ENCODE measurements at regions of chr5 and their contacts with region 1.

Region 1: GRCh38 chr5:43389679-43390329 is 22.4 kb downstream of the CCL28 start:
- DNase-seq: peak; percentile 40
- ATAC-seq: peak; percentile 88
- H3K4me3 ChIP-seq: no peak overlapping the region
- H3K27ac ChIP-seq: no peak overlapping the region
- H3K4me1 ChIP-seq: peaks cover 8% of the 10 kb centered on the region
- H3K27me3 ChIP-seq: no peaks in the 10 kb centered on the region
- CTCF ChIP-seq: peak; percentile 71 to 86 (median 84); a peak in 5 of 6 replicates
- EP300 ChIP-seq: no peak
- POLR2A ChIP-seq: no peak
- RAD21 ChIP-seq: peak; percentile 71

Region 2: DNA sequence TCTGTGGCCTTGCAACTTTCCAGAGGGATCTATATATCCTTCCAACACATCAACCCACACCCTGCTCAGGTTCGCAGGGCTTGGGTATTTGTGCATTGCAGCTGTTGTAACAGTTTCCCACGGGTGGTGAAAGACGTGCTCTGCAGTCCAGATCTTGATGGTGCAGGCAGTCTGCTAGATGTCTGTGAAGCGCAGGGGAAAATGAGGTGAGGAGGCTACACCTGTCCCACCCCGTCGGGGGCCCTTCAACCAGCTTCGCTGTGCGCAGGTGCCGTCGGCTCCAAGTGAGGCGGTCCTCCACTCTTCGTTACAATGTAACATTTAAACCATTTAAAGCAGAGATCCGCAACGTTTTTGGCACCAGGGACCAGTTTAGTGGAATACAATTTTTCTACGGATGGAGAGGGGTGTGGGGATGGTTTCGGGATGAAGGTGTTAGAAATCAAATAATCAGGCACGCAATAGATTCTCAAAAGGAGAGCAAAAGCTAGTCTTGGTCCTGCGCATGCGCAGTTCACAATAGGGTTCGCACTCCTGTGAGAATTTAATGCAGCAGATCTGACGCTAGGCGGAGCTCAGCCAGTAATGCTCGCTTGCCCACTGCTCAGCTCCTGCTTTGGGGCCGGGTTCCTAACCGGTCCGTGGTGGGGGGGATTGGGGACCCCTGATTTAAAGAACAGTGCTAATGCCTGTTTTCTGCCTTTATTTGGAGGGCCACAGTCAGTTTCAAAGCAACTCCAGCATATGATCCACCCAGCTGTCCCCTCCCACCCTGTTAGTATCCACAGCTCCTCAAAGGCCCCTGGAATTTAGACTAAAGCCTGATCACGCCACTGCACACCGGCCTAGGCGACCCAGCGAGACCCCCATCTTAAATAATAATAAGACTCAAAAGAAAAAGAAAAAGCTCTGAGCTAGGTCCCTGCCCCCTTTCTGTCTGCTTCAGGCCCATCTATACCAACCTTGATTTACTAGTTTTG is 481.0 kb before region 1 on chr5:
- CTCF ChIA-PET with region 1: interaction called, 9 read pairs
- POLR2A ChIA-PET with region 1: no interaction called
- RAD21 ChIA-PET with region 1: interaction called, 9 read pairs
- SMC1A ChIA-PET with region 1: interaction called, 9 read pairs
- in situ Hi-C with region 1: loop called (anchors 10 kb)
- intact Hi-C with region 1: loop called (anchors 2 kb)
- DNase-seq: peak; percentile 51
- ATAC-seq: peak; percentile 97
- H3K4me3 ChIP-seq: peak overlapping the region; percentile 62; the same call in 1 of the 2 replicates
- H3K27ac ChIP-seq: no peak overlapping the region
- H3K4me1 ChIP-seq: peaks cover 4% of the 10 kb centered on the region; the same call in 1 of the 2 replicates
- H3K27me3 ChIP-seq: no peaks in the 10 kb centered on the region; a peak in 1 of 4 replicates
- CTCF ChIP-seq: peak; percentile 80 to 91 (median 87)
- EP300 ChIP-seq: no peak
- POLR2A ChIP-seq: no peak
- RAD21 ChIP-seq: peak; percentile 70

Region 3: DNA sequence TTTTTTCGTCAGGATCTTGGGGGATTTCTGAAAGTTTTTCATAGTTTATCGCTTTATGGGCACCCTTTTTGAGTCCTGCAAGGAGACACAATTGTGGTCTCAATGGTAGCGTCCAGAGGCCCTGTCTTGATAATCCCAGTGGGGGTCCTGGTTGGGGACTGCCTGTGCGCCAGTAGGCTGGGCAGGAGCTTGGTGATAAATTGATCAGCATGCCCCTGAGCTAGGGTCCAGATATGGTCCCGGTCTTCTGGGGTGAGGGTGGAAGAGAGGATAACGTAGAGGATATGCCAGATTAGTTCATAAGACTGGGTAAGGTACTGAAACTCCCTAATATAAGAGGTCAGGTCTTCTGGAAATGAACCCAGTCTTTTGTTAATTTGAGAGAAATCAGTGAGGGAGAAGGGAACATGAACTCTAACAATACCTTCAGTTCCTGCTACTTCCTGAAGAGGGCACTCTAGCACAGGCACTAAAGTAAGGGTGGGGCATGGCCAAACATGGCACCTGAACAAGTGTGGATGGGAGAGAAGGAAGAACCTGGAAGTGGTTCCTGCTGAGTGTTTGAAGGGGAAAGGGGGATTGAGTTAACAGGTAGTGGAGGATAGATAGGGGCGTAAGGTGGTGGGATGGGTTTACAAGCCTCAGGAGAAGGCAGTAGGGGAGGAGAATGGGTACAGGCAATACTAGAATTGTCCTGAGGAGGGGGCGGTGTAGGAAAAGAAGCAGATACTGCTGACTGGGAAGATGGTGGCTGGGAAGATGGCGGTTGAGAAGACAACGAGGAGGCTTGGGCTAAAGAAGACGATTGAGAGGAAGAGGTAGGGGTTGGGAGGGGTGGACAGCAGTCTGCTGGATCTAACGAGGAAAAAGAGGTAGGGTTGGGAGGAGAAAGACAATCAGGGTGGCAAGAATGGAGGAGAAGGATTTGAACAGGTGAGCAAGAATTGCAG is 315.9 kb before region 1 on chr5:
- CTCF ChIA-PET with region 1: interaction called, 13 read pairs
- POLR2A ChIA-PET with region 1: no interaction called
- RAD21 ChIA-PET with region 1: interaction called, 8 read pairs
- SMC1A ChIA-PET with region 1: no interaction called
- in situ Hi-C with region 1: loop called (anchors 10 kb)
- intact Hi-C with region 1: loop called (anchors 10 kb)
- DNase-seq: no peak
- ATAC-seq: peak; percentile 66
- H3K4me3 ChIP-seq: no peak overlapping the region
- H3K27ac ChIP-seq: no peak overlapping the region
- H3K4me1 ChIP-seq: 0 out of 2 replicates have a peak, but pooled peaks cover 4% of the 10 kb centered on the region
- H3K27me3 ChIP-seq: no peaks in the 10 kb centered on the region
- CTCF ChIP-seq: peak; percentile 50 to 71 (median 71); a peak in 5 of 6 replicates
- EP300 ChIP-seq: no peak
- POLR2A ChIP-seq: no peak
- RAD21 ChIP-seq: peak; percentile 81

Region 4: DNA sequence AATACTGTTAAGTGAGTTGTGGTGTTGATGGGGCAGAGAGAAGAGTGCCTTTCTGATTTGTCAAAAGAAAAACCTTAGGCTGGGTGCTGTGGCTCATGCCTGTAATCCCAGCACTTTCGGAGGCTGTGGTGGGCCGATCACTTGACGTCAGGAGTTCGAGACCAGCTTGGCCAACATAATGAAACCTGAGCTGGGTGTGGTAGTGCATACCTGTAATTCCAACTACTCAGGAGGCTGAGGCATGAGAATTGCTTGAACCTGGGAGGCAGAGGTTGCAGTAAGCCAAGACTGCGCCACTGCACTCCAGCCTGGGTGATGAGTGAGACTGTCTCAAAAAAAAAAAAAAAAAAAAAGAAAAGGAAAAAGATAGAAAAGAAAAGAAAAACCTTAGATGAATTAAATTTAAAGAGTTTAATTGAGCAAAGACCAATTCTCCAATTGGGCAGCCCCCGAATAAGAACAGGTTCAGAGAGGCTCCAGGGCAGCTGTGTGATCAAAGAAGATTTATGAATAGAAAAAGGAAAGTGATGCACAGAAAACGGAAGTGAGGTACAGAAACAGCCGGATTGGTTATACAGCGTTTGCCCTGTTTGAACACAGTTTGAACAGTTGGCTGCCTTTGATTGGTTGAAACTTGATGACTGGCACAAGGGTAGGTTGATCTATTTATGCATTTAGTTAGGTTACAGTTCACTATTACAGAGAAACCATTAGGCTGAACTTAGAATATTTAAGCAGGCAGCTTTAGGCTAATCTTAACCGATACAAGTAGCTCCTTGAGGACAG is 168.5 kb before region 1 on chr5:
- CTCF ChIA-PET with region 1: interaction called, 52 read pairs
- POLR2A ChIA-PET with region 1: no interaction called
- RAD21 ChIA-PET with region 1: interaction called, 12 read pairs
- SMC1A ChIA-PET with region 1: interaction called, 32 read pairs
- in situ Hi-C with region 1: loop called (anchors 5 kb)
- intact Hi-C with region 1: no loop called
- DNase-seq: no peak
- ATAC-seq: peak; percentile 47; the same call in 2 of the 3 replicates
- H3K4me3 ChIP-seq: no peak overlapping the region
- H3K27ac ChIP-seq: no peak overlapping the region
- H3K4me1 ChIP-seq: no peaks in the 10 kb centered on the region
- H3K27me3 ChIP-seq: no peaks in the 10 kb centered on the region
- CTCF ChIP-seq: no peak
- EP300 ChIP-seq: no peak
- POLR2A ChIP-seq: no peak
- RAD21 ChIP-seq: no peak

Region 5: DNA sequence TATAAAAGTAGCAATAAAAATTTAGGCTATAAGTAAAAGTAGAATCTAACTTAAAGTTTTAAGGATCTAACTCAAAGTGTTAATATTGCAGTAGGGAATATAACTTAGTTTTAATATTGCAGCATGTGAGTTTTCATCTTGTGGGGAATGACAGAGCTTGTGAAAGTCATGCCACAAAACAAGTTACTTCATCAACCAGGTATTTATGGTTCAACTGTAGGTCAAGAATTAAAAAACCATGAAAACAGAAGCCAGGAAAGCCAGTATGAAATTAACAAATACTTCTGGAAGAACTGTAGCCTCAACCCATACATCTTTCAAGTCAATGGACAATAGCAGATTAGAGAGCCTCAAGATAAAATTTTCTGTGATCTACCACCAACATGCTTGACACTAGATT is 95.6 kb before region 1 on chr5:
- CTCF ChIA-PET with region 1: interaction called, 11 read pairs
- POLR2A ChIA-PET with region 1: no interaction called
- RAD21 ChIA-PET with region 1: interaction called, 4 read pairs
- SMC1A ChIA-PET with region 1: interaction called, 5 read pairs
- in situ Hi-C with region 1: no loop called
- intact Hi-C with region 1: no loop called
- DNase-seq: no peak
- ATAC-seq: no peak
- H3K4me3 ChIP-seq: no peak overlapping the region
- H3K27ac ChIP-seq: no peak overlapping the region
- H3K4me1 ChIP-seq: no peaks in the 10 kb centered on the region
- H3K27me3 ChIP-seq: no peaks in the 10 kb centered on the region
- CTCF ChIP-seq: no peak
- EP300 ChIP-seq: no peak
- POLR2A ChIP-seq: no peak
- RAD21 ChIP-seq: no peak

Region 6: DNA sequence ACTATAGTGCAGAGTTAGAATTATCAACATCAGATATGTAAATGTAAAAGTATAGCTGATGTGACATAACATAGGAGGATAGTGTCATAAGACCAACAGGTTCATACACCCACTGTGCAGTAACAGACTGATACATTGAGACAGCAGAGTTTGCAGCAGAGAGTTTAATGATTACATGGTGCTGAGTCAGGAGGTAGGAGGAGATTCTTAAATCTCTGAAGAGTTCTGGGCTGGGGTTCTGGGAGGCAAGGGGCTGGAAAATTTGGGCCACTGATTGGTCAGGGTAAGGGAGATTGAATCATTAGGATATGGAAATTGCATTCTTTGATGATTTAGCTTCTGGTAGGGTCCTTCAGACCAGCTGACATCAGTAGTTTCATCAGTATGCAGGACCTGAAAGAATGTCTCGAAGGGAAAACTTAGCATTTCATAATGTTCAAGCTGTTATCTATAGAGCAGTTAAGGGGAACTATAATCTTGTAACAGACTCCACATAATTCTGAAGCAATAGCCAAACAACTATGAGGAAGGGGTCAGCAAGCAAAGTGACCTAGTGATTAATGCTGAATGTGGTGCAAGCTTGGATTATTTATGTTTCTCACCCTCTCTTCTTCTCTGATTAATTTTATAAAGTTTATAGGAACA is 13.2 kb before region 1 on chr5:
- CTCF ChIA-PET with region 1: interaction called, 10 read pairs
- POLR2A ChIA-PET with region 1: no interaction called
- RAD21 ChIA-PET with region 1: interaction called, 4 read pairs
- SMC1A ChIA-PET with region 1: interaction called, 4 read pairs
- in situ Hi-C with region 1: no loop called
- intact Hi-C with region 1: no loop called
- DNase-seq: no peak
- ATAC-seq: no peak
- H3K4me3 ChIP-seq: no peak overlapping the region
- H3K27ac ChIP-seq: no peak overlapping the region
- H3K4me1 ChIP-seq: no peaks in the 10 kb centered on the region
- H3K27me3 ChIP-seq: no peaks in the 10 kb centered on the region
- CTCF ChIP-seq: no peak
- EP300 ChIP-seq: no peak
- POLR2A ChIP-seq: no peak
- RAD21 ChIP-seq: no peak

Region 7: DNA sequence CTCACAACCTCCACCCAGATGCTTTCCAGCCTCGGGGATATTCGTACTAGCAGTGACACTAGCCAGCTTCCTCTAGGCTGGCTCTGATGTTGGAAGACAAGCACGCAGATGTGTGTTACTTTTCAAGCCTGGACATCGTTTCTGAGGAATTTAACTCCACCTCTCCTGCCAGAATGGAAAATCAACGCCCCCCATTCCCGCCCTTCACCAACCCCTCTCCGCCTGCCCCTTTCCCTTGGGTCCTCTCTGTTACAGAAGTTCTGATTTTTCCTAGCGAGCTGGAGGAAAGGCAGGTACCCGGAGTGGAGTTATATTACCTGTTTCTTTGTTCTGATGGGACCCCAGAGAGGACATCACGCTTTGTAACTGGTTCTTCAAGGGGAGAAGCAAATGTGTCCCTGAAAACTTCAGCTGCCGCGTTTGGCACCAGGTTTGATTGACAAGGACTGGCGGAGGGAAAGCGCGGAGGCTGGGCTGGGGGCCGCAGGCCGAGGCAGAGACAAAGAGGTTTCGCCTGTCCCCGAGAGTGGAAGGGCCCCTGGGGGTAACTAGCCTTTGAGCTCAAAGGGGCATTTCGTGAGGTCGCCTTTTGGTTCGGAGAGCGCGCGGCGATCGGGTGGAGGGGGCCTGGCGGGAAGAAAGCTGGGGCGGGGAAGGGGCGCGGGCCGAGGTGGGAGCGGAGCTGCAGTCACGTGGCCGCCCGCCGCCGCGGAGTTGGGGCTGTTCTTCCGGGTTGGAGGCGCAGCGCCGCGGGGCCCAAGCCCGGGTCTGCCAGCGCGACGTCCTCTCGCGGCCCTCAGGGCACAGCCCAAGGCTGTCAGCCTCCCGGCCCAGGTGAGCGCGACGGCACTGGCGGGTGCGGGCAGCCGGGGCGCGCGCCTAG is 212.9 kb after region 1 on chr5 and contains the start of gene NNT:
- CTCF ChIA-PET with region 1: no interaction called
- POLR2A ChIA-PET with region 1: no interaction called
- RAD21 ChIA-PET with region 1: no interaction called
- SMC1A ChIA-PET with region 1: no interaction called
- in situ Hi-C with region 1: no loop called
- intact Hi-C with region 1: loop called (anchors 10 kb)
- DNase-seq: no peak
- ATAC-seq: peak; percentile 87
- H3K4me3 ChIP-seq: peak within 1 kb of the TSS; percentile 93
- H3K27ac ChIP-seq: peak within 1 kb of the TSS; percentile 98
- H3K4me1 ChIP-seq: peaks cover 4% of the 10 kb centered on the region; the same call in 1 of the 2 replicates
- H3K27me3 ChIP-seq: no peaks in the 10 kb centered on the region
- CTCF ChIP-seq: no peak
- EP300 ChIP-seq: no peak
- POLR2A ChIP-seq: peak; percentile 93
- RAD21 ChIP-seq: no peak
- polyA plus RNA-seq, gene NNT: 20.8 to 23.1 TPM